ENCODE measurements at regions of chr9 and their contacts with region 1.

Region 1: GRCh38 chr9:76443892-76444581 is 14.9 kb upstream of the GCNT1 start:
- DNase-seq: no peak
- H3K4me3 ChIP-seq: no peak overlapping the region
- H3K4me3 Mint-ChIP-seq: peak overlapping the region in 1 of 7 donors; percentile 22
- H3K27ac ChIP-seq: no peak overlapping the region
- H3K27ac Mint-ChIP-seq: peak overlapping the region in 3 of 8 donors; percentile 1 to 78 (median 3)
- H3K4me1 ChIP-seq: no peaks in the 10 kb centered on the region
- H3K4me1 Mint-ChIP-seq: peaks cover 3 to 24% (median 9%) of the 10 kb centered on the region in 3 donors
- H3K27me3 ChIP-seq: no peaks in the 10 kb centered on the region
- H3K27me3 Mint-ChIP-seq: no peaks in the 10 kb centered on the region

Region 2: GRCh38 chr9:76592091-76593010 is 148.3 kb after region 1 on chr9:
- CTCF ChIA-PET with region 1: no interaction called
- POLR2A ChIA-PET with region 1: no interaction called
- DNase-seq: no peak
- H3K4me3 ChIP-seq: no peak overlapping the region
- H3K4me3 Mint-ChIP-seq: no peak overlapping the region
- H3K27ac ChIP-seq: no peak overlapping the region
- H3K27ac Mint-ChIP-seq: peak overlapping the region in 1 of 8 donors; percentile 11
- H3K4me1 ChIP-seq: no peaks in the 10 kb centered on the region
- H3K4me1 Mint-ChIP-seq: peaks cover 0 to 9% (median 6%) of the 10 kb centered on the region in 3 donors
- H3K27me3 ChIP-seq: no peaks in the 10 kb centered on the region
- H3K27me3 Mint-ChIP-seq: peaks cover 0 to 3% of the 10 kb centered on the region in 2 donors

Region 3: DNA sequence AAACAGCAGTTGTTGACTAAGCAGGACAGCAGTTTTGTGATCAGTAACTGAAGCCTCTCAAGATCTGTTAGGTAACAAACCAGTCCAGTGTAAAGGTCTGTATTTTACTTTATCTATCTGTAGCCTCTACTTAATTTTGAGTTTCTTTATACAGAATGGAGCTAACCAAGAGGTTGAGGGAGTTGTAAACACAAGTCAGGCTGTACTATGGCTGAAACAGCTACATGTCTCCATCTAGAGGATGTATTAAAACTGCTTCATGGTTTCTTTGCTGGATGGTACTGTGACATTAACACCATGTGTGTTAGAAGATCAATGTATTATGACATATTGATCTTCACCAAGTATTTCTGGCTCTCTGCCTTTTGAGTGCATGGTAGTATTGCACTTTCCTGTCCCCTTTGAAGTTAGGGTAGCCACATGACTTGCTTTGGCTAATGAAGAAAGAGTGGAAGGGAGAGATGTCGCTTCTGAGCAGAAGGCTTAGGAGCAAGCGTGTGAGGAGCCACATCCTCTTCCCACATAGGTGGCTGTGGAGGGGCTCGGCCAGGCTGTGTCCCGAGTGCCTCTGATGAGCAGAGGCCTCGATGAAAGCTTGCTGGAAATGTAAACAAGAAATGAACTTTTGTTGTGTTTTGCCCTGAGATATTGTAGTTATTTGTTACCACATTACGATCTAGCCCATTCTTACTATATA is 214.6 kb after region 1 on chr9:
- CTCF ChIA-PET with region 1: interaction called, 42 read pairs
- POLR2A ChIA-PET with region 1: no interaction called
- DNase-seq: peak in 1 of 5 donors; percentile 22
- H3K4me3 ChIP-seq: no peak overlapping the region
- H3K4me3 Mint-ChIP-seq: peak overlapping the region in 1 of 7 donors; percentile 7
- H3K27ac ChIP-seq: no peak overlapping the region
- H3K27ac Mint-ChIP-seq: peak overlapping the region in 2 of 8 donors; percentile 0 to 3
- H3K4me1 ChIP-seq: peaks cover 4% of the 10 kb centered on the region
- H3K4me1 Mint-ChIP-seq: peaks cover 38 to 60% (median 51%) of the 10 kb centered on the region in 3 donors
- H3K27me3 ChIP-seq: no peaks in the 10 kb centered on the region
- H3K27me3 Mint-ChIP-seq: no peaks in the 10 kb centered on the region

Region 4: GRCh38 chr9:76704593-76705204 is 260.7 kb after region 1 on chr9:
- CTCF ChIA-PET with region 1: interaction called, 38 read pairs
- POLR2A ChIA-PET with region 1: no interaction called
- DNase-seq: peak in 2 of 5 donors; percentile 28 to 31
- H3K4me3 ChIP-seq: no peak overlapping the region
- H3K4me3 Mint-ChIP-seq: no peak overlapping the region
- H3K27ac ChIP-seq: no peak overlapping the region
- H3K27ac Mint-ChIP-seq: peak overlapping the region in 1 of 8 donors; percentile 35
- H3K4me1 ChIP-seq: peaks cover 4% of the 10 kb centered on the region
- H3K4me1 Mint-ChIP-seq: peaks cover 0 to 5% (median 0%) of the 10 kb centered on the region in 3 donors
- H3K27me3 ChIP-seq: no peaks in the 10 kb centered on the region
- H3K27me3 Mint-ChIP-seq: peaks cover 16 to 65% of the 10 kb centered on the region in 2 donors